HEK293T (cell line): ENCODE measurements at regions of chr15 and their contacts with region 1.

Region 1: DNA sequence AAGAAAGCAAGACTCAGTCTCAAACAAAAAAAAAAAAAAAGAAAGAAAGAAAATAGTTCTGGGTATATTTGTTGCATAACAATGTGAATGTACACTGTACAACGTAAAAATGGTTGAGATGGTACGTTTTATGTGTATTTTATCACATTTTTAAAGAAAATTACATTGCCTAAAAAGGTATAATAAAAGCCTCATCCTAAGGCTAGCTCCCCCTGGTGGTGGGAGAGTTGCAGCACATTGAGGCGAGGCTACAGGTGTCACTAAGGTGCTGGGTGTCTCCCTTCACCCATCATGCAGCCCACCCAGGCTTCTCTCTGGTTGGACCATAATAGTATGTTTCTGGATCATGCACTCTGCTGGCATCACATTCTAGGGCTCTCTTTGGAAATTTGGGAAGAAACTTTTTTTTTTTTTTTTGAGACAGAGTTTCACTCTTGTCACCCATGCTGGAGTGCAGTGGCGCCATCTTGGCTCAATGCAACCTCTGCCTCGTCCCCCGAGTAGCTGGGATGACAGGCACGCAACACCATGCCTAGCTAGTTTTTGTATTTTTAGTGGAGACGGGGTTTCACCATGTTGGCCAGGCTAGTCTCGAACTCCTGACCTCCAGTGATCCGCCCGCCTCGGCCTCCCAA is 12.4 kb upstream of the RAB11A start:
- DNase-seq: peak; percentile 62

Region 2: DNA sequence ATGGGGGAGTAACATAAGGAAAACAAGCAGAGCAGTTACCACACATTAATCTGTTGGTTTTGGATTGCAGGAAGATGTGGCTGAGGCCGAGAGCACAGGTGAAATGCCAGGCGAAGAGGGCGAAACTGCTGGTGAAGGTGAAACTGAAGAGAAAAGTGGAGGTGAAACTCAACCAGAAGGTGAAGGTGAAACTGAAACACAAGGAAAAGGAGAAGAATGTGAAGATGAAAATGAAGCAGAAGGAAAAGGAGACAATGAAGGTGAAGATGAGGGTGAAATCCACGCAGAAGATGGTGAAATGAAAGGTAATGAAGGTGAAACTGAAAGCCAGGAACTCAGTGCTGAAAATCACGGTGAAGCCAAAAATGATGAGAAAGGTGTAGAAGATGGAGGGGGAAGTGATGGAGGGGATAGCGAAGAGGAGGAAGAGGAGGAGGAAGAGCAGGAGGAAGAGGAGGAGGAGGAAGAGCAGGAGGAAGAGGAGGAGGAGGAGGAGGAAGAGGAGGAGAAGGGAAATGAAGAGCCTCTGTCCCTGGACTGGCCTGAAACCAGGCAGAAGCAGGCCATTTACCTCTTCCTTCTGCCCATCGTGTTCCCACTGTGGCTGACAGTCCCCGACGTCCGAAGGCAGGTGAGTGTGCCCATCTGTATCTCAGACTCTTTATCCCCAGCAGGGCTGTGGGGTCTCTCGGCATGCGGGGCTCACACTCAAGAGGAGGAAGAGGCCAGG is 206.5 kb before region 1 on chr15:
- CTCF ChIA-PET with region 1: no interaction called
- POLR2A ChIA-PET with region 1: no interaction called
- DNase-seq: no peak

Region 3: GRCh38 chr15:65832549-65833364 is 24.2 kb before region 1 on chr15:
- CTCF ChIA-PET with region 1: interaction called, 10 read pairs
- POLR2A ChIA-PET with region 1: no interaction called
- DNase-seq: peak; percentile 76

Region 4: DNA sequence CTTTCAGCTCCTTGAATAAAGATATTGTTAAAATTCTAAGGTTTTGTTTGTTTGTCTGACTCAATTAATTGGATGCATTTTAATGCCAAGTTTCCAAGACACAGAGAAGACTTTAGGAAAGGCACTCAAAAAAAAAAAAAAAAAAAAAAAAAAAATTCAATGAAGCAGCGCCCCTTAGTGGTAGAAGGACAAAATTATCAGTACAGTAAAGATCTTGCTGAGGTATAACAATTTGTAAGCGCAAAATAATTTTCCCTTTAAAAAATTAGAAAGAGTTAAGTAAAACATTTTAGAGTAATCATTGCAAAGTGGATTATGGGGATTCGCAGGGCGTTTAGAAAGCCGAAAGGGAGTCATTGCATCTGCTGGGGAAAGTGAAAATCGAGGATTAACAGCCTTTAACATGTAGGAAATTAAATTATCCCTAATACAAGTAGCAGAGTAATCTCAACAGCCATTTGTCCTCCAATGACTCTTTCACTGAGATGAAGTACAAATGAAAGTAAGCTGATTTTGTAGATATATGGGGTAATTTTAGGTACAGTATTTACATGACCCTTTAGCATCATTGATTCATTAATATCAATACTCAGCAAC is 430.6 kb after region 1 on chr15:
- CTCF ChIA-PET with region 1: interaction called, 12 read pairs
- POLR2A ChIA-PET with region 1: no interaction called
- DNase-seq: peak; percentile 36